Activated naive CD4-positive, alpha-beta T cell treated with anti-CD3 and anti-CD28 coated beads for 36 hours (primary cell): ENCODE measurements at regions of chr1 and their contacts with region 1.

Region 1: DNA sequence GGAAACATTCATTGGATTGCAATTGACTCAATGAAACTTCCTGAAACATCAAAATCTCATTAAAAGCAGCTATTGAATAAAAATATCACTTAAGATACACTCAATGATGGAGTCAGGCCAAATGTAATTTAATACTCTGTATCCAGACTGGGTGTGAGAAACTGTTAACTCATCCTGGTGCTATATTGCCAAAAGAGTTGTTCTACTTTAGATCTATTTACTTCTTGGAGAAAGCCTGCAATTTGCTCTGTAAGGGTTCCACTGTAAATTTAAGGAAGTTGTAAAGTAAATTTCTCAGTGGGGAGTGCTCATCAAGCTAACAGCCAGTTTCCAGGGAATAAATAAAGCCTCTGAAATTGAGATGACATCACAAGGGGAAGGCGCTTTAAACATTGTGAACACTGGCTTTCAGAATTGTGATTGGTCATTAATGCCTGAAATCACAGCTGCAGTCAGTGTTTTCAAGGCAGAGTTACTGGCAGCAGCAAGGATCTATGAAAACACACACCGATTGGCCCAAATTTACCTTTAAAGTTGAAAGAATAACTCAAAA is 91.4 kb downstream of the OLFM3 start:
- DNase-seq: no peak
- H3K4me3 Mint-ChIP-seq: no peak overlapping the region
- H3K27ac Mint-ChIP-seq: no peak overlapping the region
- H3K4me1 Mint-ChIP-seq: no peaks in the 10 kb centered on the region
- H3K27me3 Mint-ChIP-seq: no peaks in the 10 kb centered on the region

Region 2: DNA sequence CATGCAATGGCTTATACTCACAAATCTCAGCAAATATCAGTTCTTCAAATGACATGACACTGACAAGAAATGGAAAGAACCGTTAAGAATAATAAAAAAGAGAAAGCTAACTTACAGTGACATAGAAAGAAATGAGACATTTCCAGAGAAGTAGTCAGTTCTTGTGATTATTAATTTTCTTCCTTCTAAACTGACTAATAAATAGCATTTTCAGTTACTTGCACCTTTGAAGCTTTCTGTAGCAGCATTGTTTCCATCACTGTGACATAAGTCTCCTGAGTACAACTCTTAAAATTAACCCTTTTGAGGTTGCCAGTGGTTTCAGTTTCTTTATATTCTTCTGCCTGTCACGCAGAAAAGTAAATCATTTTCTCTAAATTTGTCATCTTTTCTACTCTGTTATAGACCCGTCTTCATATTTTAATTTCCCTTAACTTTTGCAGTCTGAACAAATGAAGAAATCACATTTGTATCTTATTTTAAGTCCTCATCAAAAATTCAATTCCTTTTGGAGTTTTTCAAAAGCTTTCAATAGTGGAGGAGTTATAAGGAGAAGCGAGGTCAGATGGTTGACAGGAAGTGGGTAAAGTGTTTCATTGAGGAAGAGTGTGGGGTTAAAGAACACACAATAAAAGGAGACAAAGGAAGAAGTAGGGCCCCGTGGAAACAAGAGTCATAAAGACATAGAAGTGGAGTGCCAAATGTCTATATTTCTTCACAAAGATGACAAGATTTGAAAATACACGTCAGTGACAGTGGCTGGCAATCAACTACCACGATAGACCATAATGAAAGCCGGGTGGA is 726.5 kb before region 1 on chr1:
- CTCF ChIA-PET with region 1: no interaction called
- intact Hi-C with region 1: no loop called
- DNase-seq: peak; percentile 66
- H3K4me3 Mint-ChIP-seq: peak overlapping the region; percentile 63
- H3K27ac Mint-ChIP-seq: peak overlapping the region; percentile 100
- H3K4me1 Mint-ChIP-seq: peaks cover 82% of the 10 kb centered on the region
- H3K27me3 Mint-ChIP-seq: no peaks in the 10 kb centered on the region

Region 3: GRCh38 chr1:101884621-101885020 is 20.7 kb before region 1 on chr1:
- CTCF ChIA-PET with region 1: no interaction called
- intact Hi-C with region 1: loop called (anchors 2 kb)
- DNase-seq: no peak
- H3K4me3 Mint-ChIP-seq: no peak overlapping the region
- H3K27ac Mint-ChIP-seq: no peak overlapping the region
- H3K4me1 Mint-ChIP-seq: no peaks in the 10 kb centered on the region
- H3K27me3 Mint-ChIP-seq: no peaks in the 10 kb centered on the region